ENCODE measurements at regions of chr6 and their contacts with region 1.

Region 1: DNA sequence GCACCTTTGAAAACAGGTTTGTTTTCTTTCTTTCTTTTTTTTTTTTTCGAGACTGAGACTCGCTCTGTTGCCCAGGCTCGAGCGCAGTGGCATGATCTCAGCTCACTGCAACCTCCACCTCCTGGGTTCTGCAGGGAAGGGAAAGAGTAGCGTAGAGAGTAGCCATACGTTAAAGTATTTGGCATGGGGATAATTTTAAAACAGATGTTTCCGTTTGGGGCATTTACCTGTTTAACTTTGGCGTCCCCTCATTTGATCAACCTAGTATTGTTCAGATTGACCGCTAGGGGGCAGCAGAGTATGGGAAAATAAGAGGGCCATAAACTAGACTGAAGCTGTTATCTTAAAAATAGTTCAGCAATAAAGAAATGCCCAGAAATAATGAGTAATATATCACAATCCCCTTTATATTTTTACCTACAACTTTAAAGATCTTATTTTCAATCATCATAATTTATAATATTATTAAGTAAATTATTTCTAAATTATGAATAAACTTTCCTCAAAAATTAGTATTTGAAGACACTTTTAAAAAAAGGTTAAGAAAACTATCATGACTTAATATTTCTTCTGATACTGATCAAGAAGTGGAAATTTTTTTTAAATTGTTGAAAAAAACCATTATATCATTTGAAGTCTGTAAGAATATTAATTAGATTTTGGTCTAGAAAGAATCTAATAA is 7.6 kb upstream of the TAAR9 start:
- DNase-seq: peak; percentile 18 to 81 (median 76)
- ATAC-seq: peak; percentile 74
- H3K4me3 ChIP-seq: no peak overlapping the region
- H3K4me3 Mint-ChIP-seq: no peak overlapping the region
- H3K27ac ChIP-seq: no peak overlapping the region
- H3K27ac Mint-ChIP-seq: no peak overlapping the region
- H3K4me1 ChIP-seq: no peaks in the 10 kb centered on the region
- H3K4me1 Mint-ChIP-seq: peaks cover 3% of the 10 kb centered on the region
- H3K27me3 ChIP-seq: no peaks in the 10 kb centered on the region
- H3K27me3 Mint-ChIP-seq: peaks cover 19% of the 10 kb centered on the region
- CTCF ChIP-seq: peak; percentile 76

Region 2: GRCh38 chr6:132512638-132513632 is 17.5 kb before region 1 on chr6 and contains the start of gene STX7:
- CTCF ChIA-PET with region 1: interaction called, 12 read pairs
- POLR2A ChIA-PET with region 1: interaction called, 4 read pairs
- intact Hi-C with region 1: no loop called
- DNase-seq: peak; percentile 67 to 91 (median 85)
- ATAC-seq: peak; percentile 93
- H3K4me3 ChIP-seq: peak within 1 kb of the TSS; percentile 75 to 90
- H3K4me3 Mint-ChIP-seq: peak within 1 kb of the TSS; percentile 97
- H3K27ac ChIP-seq: peak within 1 kb of the TSS; percentile 43 to 57
- H3K27ac Mint-ChIP-seq: peak within 1 kb of the TSS; percentile 91
- H3K4me1 ChIP-seq: peaks cover 8% of the 10 kb centered on the region
- H3K4me1 Mint-ChIP-seq: peaks cover 35% of the 10 kb centered on the region
- H3K27me3 ChIP-seq: no peaks in the 10 kb centered on the region
- H3K27me3 Mint-ChIP-seq: no peaks in the 10 kb centered on the region
- CTCF ChIP-seq: no peak
- total RNA-seq, gene STX7: 5.4 to 5.5 TPM

Region 3: GRCh38 chr6:132768051-132768517 is 237.7 kb after region 1 on chr6:
- CTCF ChIA-PET with region 1: interaction called, 4 read pairs
- POLR2A ChIA-PET with region 1: no interaction called
- intact Hi-C with region 1: loop called (anchors 1 to 2 kb)
- DNase-seq: peak in 5 of 9 experiments; percentile 1 to 55 (median 31)
- ATAC-seq: peak; percentile 39
- H3K4me3 ChIP-seq: no peak overlapping the region
- H3K4me3 Mint-ChIP-seq: no peak overlapping the region
- H3K27ac ChIP-seq: no peak overlapping the region
- H3K27ac Mint-ChIP-seq: no peak overlapping the region
- H3K4me1 ChIP-seq: peaks cover 12% of the 10 kb centered on the region
- H3K4me1 Mint-ChIP-seq: peaks cover 19% of the 10 kb centered on the region
- H3K27me3 ChIP-seq: no peaks in the 10 kb centered on the region
- H3K27me3 Mint-ChIP-seq: no peaks in the 10 kb centered on the region
- CTCF ChIP-seq: peak; percentile 28

Region 4: DNA sequence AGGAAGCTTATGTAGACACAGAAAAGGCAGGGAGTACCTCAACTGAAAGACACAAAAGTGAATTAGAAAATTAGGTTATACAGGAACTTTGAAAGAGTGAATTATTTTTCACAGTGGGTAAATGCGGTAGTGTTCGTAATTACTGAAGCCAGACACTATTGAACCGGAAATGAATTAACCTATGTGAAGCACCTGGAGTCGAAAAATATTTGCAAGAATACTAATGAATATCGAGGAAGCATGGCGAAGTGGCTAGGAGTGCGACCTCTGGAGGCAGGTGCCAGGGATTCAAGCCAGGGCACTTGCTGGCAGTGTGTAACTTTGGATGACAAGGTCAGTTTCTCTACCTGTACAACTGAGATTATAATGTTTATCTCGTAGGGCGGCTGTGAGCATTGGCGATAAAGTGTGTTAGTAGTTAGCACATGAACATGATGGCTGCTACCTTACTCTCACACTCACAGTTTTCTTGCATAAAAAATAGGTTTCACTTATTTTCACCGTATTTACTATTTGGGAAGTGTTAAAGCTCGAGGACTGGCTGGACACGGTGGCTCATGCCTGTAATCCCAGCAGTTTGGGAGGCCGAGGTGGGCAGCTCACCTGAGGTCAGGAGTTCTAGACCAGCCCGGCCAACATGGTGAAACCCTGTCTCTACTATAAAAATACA is 268.6 kb after region 1 on chr6:
- CTCF ChIA-PET with region 1: interaction called, 5 read pairs
- POLR2A ChIA-PET with region 1: no interaction called
- intact Hi-C with region 1: loop called in 1 of 2 experiments (anchors 1 kb)
- DNase-seq: peak; percentile 41 to 85 (median 70)
- ATAC-seq: peak; percentile 80
- H3K4me3 ChIP-seq: peak overlapping the region in 1 of 2 experiments; percentile 91
- H3K4me3 Mint-ChIP-seq: no peak overlapping the region
- H3K27ac ChIP-seq: peak overlapping the region in 1 of 2 experiments; percentile 55
- H3K27ac Mint-ChIP-seq: no peak overlapping the region
- H3K4me1 ChIP-seq: peaks cover 5% of the 10 kb centered on the region
- H3K4me1 Mint-ChIP-seq: peaks cover 29% of the 10 kb centered on the region
- H3K27me3 ChIP-seq: no peaks in the 10 kb centered on the region
- H3K27me3 Mint-ChIP-seq: no peaks in the 10 kb centered on the region
- CTCF ChIP-seq: peak; percentile 72

Region 5: GRCh38 chr6:133512410-133513016 is 982.1 kb after region 1 on chr6:
- CTCF ChIA-PET with region 1: no interaction called
- POLR2A ChIA-PET with region 1: no interaction called
- intact Hi-C with region 1: loop called in 1 of 2 experiments (anchors 5 kb)
- DNase-seq: peak in 2 of 9 experiments; percentile 20 to 23
- ATAC-seq: no peak
- H3K4me3 ChIP-seq: no peak overlapping the region
- H3K4me3 Mint-ChIP-seq: no peak overlapping the region
- H3K27ac ChIP-seq: no peak overlapping the region
- H3K27ac Mint-ChIP-seq: no peak overlapping the region
- H3K4me1 ChIP-seq: no peaks in the 10 kb centered on the region
- H3K4me1 Mint-ChIP-seq: no peaks in the 10 kb centered on the region
- H3K27me3 ChIP-seq: no peaks in the 10 kb centered on the region
- H3K27me3 Mint-ChIP-seq: peaks cover 18% of the 10 kb centered on the region
- CTCF ChIP-seq: no peak

Region 6: DNA sequence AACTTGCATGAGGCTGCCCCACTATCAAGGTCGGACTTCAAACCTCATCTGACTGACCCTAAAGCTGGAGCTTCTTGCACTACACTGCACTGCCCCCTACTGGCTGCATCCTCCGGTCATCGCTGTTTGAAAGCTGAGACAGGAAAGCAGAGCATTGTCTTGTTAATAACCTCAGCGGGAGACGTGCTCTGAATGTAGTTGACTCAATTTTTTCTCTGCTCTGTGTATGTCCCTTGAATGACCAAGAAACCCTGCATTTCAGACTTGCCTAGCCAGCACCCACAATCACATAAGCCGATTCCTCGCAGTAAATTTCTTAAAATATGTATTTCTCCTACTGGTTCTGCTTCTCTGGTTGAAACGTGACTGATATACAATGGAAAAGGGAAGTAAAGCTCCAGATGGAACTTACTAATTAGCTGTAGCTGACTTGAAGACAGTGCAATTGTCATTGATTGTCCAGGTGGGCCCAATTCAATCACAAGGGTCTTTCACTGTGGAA is 1386.3 kb after region 1 on chr6:
- CTCF ChIA-PET with region 1: interaction called, 5 read pairs
- POLR2A ChIA-PET with region 1: no interaction called
- intact Hi-C with region 1: loop called (anchors 1 to 5 kb)
- DNase-seq: peak; percentile 21 to 79 (median 70)
- ATAC-seq: peak; percentile 52
- H3K4me3 ChIP-seq: no peak overlapping the region
- H3K4me3 Mint-ChIP-seq: no peak overlapping the region
- H3K27ac ChIP-seq: no peak overlapping the region
- H3K27ac Mint-ChIP-seq: no peak overlapping the region
- H3K4me1 ChIP-seq: peaks cover 5% of the 10 kb centered on the region
- H3K4me1 Mint-ChIP-seq: peaks cover 3% of the 10 kb centered on the region
- H3K27me3 ChIP-seq: no peaks in the 10 kb centered on the region
- H3K27me3 Mint-ChIP-seq: peaks cover 13% of the 10 kb centered on the region
- CTCF ChIP-seq: peak; percentile 71